Natural killer cell (primary cell): ENCODE measurements at regions of chr9 and their contacts with region 1.

Region 1: GRCh38 chr9:122092611-122093506 is at the start of gene TTLL11:
- DNase-seq: peak; percentile 96 to 97
- ATAC-seq: peak; percentile 94 to 96 (median 95)
- H3K4me3 ChIP-seq: peak within 1 kb of the TSS; percentile 59
- H3K4me3 Mint-ChIP-seq: peak within 1 kb of the TSS; percentile 92
- H3K27ac ChIP-seq: no peak within 1 kb of the TSS
- H3K27ac Mint-ChIP-seq: peak within 1 kb of the TSS; percentile 59 to 85
- H3K4me1 ChIP-seq: peaks cover 22% of the 10 kb centered on the region
- H3K4me1 Mint-ChIP-seq: peaks cover 44% of the 10 kb centered on the region in 2 donors
- H3K27me3 ChIP-seq: no peaks in the 10 kb centered on the region
- H3K27me3 Mint-ChIP-seq: peaks cover 7 to 8% of the 10 kb centered on the region in 2 donors
- CTCF ChIP-seq: no peak
- total RNA-seq, gene TTLL11: 3.4 to 4.6 (median 3.6) TPM

Region 2: DNA sequence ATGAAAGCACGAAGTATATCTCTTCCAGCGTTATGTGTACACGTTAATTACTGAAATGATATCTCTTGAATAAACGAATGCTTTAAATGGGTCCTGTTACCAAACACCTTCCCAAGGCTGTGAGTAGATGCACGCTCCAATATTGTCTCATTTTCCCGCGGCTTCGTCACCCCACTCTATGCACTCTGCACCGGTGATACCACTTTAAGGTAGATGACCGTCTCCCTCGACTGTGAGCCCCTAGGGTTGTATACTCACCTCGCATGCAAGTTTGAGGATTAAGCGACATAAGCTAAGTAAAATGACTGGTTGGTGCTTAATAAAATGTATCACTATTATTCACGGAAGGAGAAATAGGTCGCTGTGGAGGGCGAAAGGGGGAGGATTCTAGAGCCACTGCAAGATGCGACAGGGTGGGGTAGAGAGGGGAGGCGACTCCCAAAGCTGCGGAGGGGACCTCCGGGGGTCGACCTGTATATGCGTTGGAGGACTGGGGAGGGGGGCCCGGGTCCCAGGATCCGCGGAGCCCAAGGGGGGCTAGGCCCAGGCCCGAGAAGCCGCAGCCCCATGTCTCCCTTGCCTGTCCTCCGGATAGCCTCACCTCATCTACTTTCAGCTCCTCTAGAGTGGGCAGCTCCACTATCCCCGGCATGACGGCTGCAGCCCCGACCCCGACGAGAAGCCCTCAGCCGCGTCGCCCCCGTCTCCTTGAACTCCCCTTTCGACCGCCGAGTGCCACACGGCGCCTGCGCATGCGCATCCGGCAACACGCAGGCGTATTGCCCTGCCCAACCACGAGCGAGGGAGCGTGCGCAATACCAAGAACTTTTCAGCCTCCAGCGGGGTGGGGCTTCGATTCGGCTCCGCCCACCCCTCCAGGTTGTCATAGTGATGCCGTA is 66.4 kb after region 1 on chr9 and contains the starts of genes MORN5 and NDUFA8:
- intact Hi-C with region 1: loop called (anchors 2 kb)
- DNase-seq: peak; percentile 95 to 99
- ATAC-seq: peak; percentile 94 to 96 (median 96)
- H3K4me3 ChIP-seq: peak within 1 kb of the TSS; percentile 80
- H3K4me3 Mint-ChIP-seq: peak within 1 kb of the TSS; percentile 99
- H3K27ac ChIP-seq: peak within 1 kb of the TSS; percentile 69
- H3K27ac Mint-ChIP-seq: peak within 1 kb of the TSS; percentile 93 to 99
- H3K4me1 ChIP-seq: peaks cover 16% of the 10 kb centered on the region
- H3K4me1 Mint-ChIP-seq: peaks cover 42 to 43% of the 10 kb centered on the region in 2 donors
- H3K27me3 ChIP-seq: no peaks in the 10 kb centered on the region
- H3K27me3 Mint-ChIP-seq: peaks cover 23 to 33% of the 10 kb centered on the region in 2 donors
- CTCF ChIP-seq: no peak
- total RNA-seq, gene MORN5: not detected
- total RNA-seq, gene NDUFA8: 6.6 to 15.9 (median 10.8) TPM

Region 3: GRCh38 chr9:122236681-122237080 is 143.8 kb after region 1 on chr9:
- intact Hi-C with region 1: no loop called
- DNase-seq: no peak
- ATAC-seq: no peak
- H3K4me3 ChIP-seq: no peak overlapping the region
- H3K4me3 Mint-ChIP-seq: no peak overlapping the region
- H3K27ac ChIP-seq: no peak overlapping the region
- H3K27ac Mint-ChIP-seq: no peak overlapping the region
- H3K4me1 ChIP-seq: no peaks in the 10 kb centered on the region
- H3K4me1 Mint-ChIP-seq: no peaks in the 10 kb centered on the region
- H3K27me3 ChIP-seq: no peaks in the 10 kb centered on the region
- H3K27me3 Mint-ChIP-seq: peaks cover 0 to 4% of the 10 kb centered on the region in 2 donors
- CTCF ChIP-seq: no peak

Region 4: GRCh38 chr9:122264360-122265148 is 171.7 kb after region 1 on chr9 and contains the starts of genes MRRF and RBM18:
- intact Hi-C with region 1: loop called (anchors 2 kb)
- DNase-seq: peak; percentile 96
- ATAC-seq: peak; percentile 78 to 91 (median 82)
- H3K4me3 ChIP-seq: peak within 1 kb of the TSS; percentile 88
- H3K4me3 Mint-ChIP-seq: peak within 1 kb of the TSS; percentile 99
- H3K27ac ChIP-seq: peak within 1 kb of the TSS; percentile 85
- H3K27ac Mint-ChIP-seq: peak within 1 kb of the TSS; percentile 99 to 100
- H3K4me1 ChIP-seq: peaks cover 13% of the 10 kb centered on the region
- H3K4me1 Mint-ChIP-seq: peaks cover 57% of the 10 kb centered on the region in 2 donors
- H3K27me3 ChIP-seq: no peaks in the 10 kb centered on the region
- H3K27me3 Mint-ChIP-seq: no peaks in the 10 kb centered on the region
- CTCF ChIP-seq: no peak
- total RNA-seq, gene MRRF: 17.7 to 29.9 (median 21.3) TPM
- total RNA-seq, gene RBM18: 24.9 to 30.9 (median 29.7) TPM

Region 5: GRCh38 chr9:122350638-122351355 is 257.9 kb after region 1 on chr9:
- intact Hi-C with region 1: loop called (anchors 1 kb)
- DNase-seq: peak; percentile 78 to 83
- ATAC-seq: peak; percentile 84 to 88 (median 85)
- H3K4me3 ChIP-seq: no peak overlapping the region
- H3K4me3 Mint-ChIP-seq: no peak overlapping the region
- H3K27ac ChIP-seq: no peak overlapping the region
- H3K27ac Mint-ChIP-seq: no peak overlapping the region
- H3K4me1 ChIP-seq: peaks cover 12% of the 10 kb centered on the region
- H3K4me1 Mint-ChIP-seq: peaks cover 0 to 17% of the 10 kb centered on the region in 2 donors
- H3K27me3 ChIP-seq: peaks cover 5% of the 10 kb centered on the region
- H3K27me3 Mint-ChIP-seq: peaks cover 20 to 29% of the 10 kb centered on the region in 2 donors
- CTCF ChIP-seq: peak; percentile 94

Region 6: GRCh38 chr9:122453677-122454135 is 360.8 kb after region 1 on chr9:
- intact Hi-C with region 1: loop called (anchors 10 kb)
- DNase-seq: no peak
- ATAC-seq: no peak
- H3K4me3 ChIP-seq: no peak overlapping the region
- H3K4me3 Mint-ChIP-seq: no peak overlapping the region
- H3K27ac ChIP-seq: no peak overlapping the region
- H3K27ac Mint-ChIP-seq: no peak overlapping the region
- H3K4me1 ChIP-seq: no peaks in the 10 kb centered on the region
- H3K4me1 Mint-ChIP-seq: no peaks in the 10 kb centered on the region
- H3K27me3 ChIP-seq: no peaks in the 10 kb centered on the region
- H3K27me3 Mint-ChIP-seq: peaks cover 15 to 24% of the 10 kb centered on the region in 2 donors
- CTCF ChIP-seq: no peak